Sciatic nerve (tissue), 2 donors: ENCODE measurements at regions of chr11 and their contacts with region 1.

Region 1: DNA sequence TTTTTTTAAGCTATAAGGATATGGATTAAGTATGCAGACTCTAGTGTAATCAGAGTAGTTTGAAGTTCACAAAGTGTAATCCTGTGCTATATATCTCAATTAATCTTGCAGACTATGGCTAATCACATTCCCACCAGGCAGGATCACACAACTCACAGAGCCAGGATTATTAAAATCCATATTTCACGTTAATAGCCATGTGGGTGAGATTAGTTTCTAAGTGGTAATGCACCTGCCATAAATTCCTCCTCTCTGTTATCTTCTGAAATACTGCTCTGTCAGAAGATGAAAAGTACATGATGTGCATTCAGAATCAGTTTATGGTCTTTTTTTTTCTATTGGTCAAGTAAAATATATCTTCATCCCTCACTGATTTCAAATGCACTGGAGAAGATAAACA is 686.1 kb downstream of the CNTN5 start:
- DNase-seq: no peak
- ATAC-seq: no peak

Region 2: GRCh38 chr11:99638073-99638553 is 68.7 kb before region 1 on chr11:
- intact Hi-C with region 1: no loop called
- DNase-seq: no peak
- ATAC-seq: no peak

Region 3: GRCh38 chr11:101138245-101138930 is 1431.5 kb after region 1 on chr11:
- intact Hi-C with region 1: loop called (anchors 5 kb)
- DNase-seq: no peak
- ATAC-seq: no peak